ENCODE measurements at regions of chr15 and their contacts with region 1.

Region 1: DNA sequence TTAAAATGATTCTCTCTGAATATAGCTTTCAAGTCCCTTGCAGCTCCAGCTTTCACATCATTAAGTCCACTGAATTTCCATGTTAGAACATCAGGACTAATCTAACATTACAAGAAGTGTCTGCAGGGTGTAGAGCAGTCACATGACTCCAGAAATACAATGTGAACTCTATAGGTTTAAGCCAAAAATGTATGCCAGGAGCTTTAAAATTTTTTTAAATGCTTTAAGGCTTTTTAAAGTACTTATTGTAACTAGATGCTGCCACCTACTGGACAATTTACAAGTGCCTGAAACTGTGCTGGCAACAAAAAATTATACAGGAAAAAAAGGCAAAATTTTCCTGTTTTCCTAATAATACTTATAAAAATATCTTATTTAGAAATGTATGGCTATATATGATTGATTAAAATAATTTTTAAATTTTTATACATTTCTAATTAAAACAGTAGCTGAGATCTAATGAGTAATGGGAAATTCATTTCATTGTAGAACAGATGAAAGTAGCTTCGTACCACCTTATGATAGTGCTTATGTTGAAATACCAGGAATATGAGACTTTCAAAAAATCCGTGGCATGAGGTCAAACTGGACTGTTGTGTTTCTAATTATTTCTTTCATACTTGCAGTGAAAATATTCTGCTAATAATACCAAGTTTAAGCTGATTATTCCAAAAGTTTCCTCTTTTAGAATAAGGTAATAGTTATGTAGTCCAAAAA is 25.7 kb downstream of the FSIP1 start:
- DNase-seq: peak; percentile 38
- ATAC-seq: peak; percentile 37
- H3K4me3 Mint-ChIP-seq: no peak overlapping the region
- H3K27ac Mint-ChIP-seq: no peak overlapping the region
- H3K4me1 Mint-ChIP-seq: no peaks in the 10 kb centered on the region
- H3K27me3 Mint-ChIP-seq: no peaks in the 10 kb centered on the region
- CTCF ChIP-seq: peak; percentile 90

Region 2: DNA sequence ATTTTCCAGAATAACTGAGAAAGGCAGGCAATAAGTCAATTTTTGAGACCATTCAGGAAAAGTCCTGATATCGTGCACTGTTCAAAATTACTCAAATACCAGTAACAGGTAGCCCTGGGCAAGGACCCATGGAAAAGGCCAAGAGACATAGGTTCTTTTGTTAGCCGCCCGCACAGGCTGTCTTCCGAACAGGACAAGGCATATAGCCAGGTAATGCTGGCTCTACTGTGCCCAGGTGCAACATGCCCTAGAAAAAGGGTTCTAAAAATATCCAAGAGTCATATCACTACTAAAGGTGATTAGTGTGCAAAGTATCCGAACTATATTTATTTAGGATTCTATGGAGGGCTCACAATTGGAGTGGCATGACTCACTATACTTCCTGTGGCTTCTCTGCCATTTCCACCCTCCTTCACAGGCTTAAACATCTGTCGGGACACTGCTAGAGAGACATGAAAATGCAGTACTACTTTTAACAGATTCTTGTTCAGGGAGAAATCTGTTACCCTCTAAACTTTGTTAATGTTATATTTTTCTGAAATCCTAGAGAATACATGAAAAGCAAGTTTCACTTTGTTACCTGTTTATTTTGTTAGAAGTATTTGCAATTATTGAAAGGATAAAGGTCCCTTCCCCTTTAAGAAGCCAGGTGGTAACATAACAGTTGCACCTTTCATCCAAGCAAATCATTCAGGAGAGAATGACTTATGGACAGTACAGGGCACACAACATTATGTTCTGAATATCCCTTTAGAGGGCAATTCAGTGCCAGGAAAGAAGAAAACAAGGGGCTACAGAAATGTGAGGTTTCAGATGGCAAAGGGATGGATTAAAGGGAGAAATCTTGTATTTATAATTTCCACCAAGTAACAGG is 469.4 kb before region 1 on chr15:
- CTCF ChIA-PET with region 1: no interaction called
- POLR2A ChIA-PET with region 1: no interaction called
- intact Hi-C with region 1: no loop called
- DNase-seq: no peak
- ATAC-seq: no peak
- H3K4me3 Mint-ChIP-seq: no peak overlapping the region
- H3K27ac Mint-ChIP-seq: no peak overlapping the region
- H3K4me1 Mint-ChIP-seq: no peaks in the 10 kb centered on the region
- H3K27me3 Mint-ChIP-seq: peaks cover 21% of the 10 kb centered on the region
- CTCF ChIP-seq: no peak

Region 3: GRCh38 chr15:39539466-39539865 is 217.5 kb before region 1 on chr15:
- CTCF ChIA-PET with region 1: no interaction called
- POLR2A ChIA-PET with region 1: no interaction called
- intact Hi-C with region 1: no loop called
- DNase-seq: no peak
- ATAC-seq: no peak
- H3K4me3 Mint-ChIP-seq: no peak overlapping the region
- H3K27ac Mint-ChIP-seq: no peak overlapping the region
- H3K4me1 Mint-ChIP-seq: no peaks in the 10 kb centered on the region
- H3K27me3 Mint-ChIP-seq: peaks cover 3% of the 10 kb centered on the region
- CTCF ChIP-seq: no peak

Region 4: GRCh38 chr15:39605146-39605545 is 151.8 kb before region 1 on chr15:
- CTCF ChIA-PET with region 1: interaction called, 12 read pairs
- POLR2A ChIA-PET with region 1: no interaction called
- intact Hi-C with region 1: no loop called
- DNase-seq: no peak
- ATAC-seq: no peak
- H3K4me3 Mint-ChIP-seq: no peak overlapping the region
- H3K27ac Mint-ChIP-seq: no peak overlapping the region
- H3K4me1 Mint-ChIP-seq: peaks cover 2% of the 10 kb centered on the region
- H3K27me3 Mint-ChIP-seq: no peaks in the 10 kb centered on the region
- CTCF ChIP-seq: no peak

Region 5: DNA sequence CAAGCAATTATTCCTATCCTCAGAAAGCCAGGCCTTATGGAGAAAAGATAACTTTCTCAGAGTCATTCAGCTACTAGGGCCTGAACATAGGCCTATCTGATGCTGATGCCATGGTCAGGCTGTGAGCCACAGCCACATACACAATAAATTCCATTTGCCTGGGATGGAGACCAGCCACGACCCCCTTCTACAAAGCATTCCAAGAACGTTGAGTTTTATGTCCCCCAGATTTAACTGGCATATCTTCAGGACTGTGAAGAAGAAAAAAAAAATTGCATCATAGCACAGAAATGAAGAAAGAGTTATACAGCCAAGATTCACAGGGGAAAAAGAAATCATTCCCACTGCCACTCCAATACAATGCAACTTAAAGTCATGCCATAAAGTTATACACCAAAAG is 76.1 kb before region 1 on chr15:
- CTCF ChIA-PET with region 1: interaction called, 112 read pairs
- POLR2A ChIA-PET with region 1: no interaction called
- intact Hi-C with region 1: loop called (anchors 5 kb)
- DNase-seq: no peak
- ATAC-seq: no peak
- H3K4me3 Mint-ChIP-seq: no peak overlapping the region
- H3K27ac Mint-ChIP-seq: no peak overlapping the region
- H3K4me1 Mint-ChIP-seq: no peaks in the 10 kb centered on the region
- H3K27me3 Mint-ChIP-seq: no peaks in the 10 kb centered on the region
- CTCF ChIP-seq: no peak

Region 6: GRCh38 chr15:39692356-39693327 is 64.3 kb before region 1 on chr15:
- CTCF ChIA-PET with region 1: interaction called, 112 read pairs
- POLR2A ChIA-PET with region 1: no interaction called
- intact Hi-C with region 1: loop called (anchors 5 kb)
- DNase-seq: no peak
- ATAC-seq: no peak
- H3K4me3 Mint-ChIP-seq: no peak overlapping the region
- H3K27ac Mint-ChIP-seq: no peak overlapping the region
- H3K4me1 Mint-ChIP-seq: no peaks in the 10 kb centered on the region
- H3K27me3 Mint-ChIP-seq: no peaks in the 10 kb centered on the region
- CTCF ChIP-seq: no peak

Region 7: GRCh38 chr15:39736412-39737197 is 20.4 kb before region 1 on chr15:
- CTCF ChIA-PET with region 1: interaction called, 25 read pairs
- POLR2A ChIA-PET with region 1: no interaction called
- intact Hi-C with region 1: no loop called
- DNase-seq: no peak
- ATAC-seq: no peak
- H3K4me3 Mint-ChIP-seq: no peak overlapping the region
- H3K27ac Mint-ChIP-seq: no peak overlapping the region
- H3K4me1 Mint-ChIP-seq: no peaks in the 10 kb centered on the region
- H3K27me3 Mint-ChIP-seq: no peaks in the 10 kb centered on the region
- CTCF ChIP-seq: no peak

Region 8: DNA sequence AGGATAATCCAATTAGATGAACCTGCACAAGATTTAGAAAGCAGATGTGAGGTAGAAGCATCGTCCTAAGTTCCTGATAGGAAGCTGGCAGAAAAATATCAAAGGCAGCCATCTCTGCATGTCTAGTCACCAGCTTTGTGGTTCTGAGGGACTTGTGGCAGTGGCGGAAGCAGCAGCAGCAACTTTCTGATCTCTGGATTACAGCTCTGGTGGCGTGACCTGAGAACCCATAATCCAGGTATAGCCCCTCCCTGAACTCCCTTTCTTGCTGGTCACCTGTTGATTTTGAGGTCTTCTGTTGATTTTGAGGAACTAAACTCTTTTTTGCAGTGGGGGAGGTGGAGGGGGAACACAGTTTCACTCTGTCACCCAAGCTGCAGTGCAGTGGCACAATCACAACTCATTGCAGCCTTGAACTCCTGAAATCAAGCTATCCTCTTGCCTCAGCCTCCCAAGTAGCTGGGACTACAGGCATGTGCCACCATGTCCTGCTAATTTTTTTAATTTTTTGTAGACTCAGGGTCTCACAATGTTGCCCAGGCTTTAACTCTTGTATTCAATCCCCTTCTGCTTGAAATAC is 17.8 kb after region 1 on chr15:
- CTCF ChIA-PET with region 1: interaction called, 41 read pairs
- POLR2A ChIA-PET with region 1: interaction called, 4 read pairs
- intact Hi-C with region 1: no loop called
- DNase-seq: peak; percentile 72
- ATAC-seq: peak; percentile 90
- H3K4me3 Mint-ChIP-seq: peak overlapping the region; percentile 41
- H3K27ac Mint-ChIP-seq: peak overlapping the region; percentile 69
- H3K4me1 Mint-ChIP-seq: peaks cover 20% of the 10 kb centered on the region
- H3K27me3 Mint-ChIP-seq: no peaks in the 10 kb centered on the region
- CTCF ChIP-seq: no peak

Region 9: GRCh38 chr15:40069178-40070165 is 312.5 kb after region 1 on chr15:
- CTCF ChIA-PET with region 1: no interaction called
- POLR2A ChIA-PET with region 1: no interaction called
- intact Hi-C with region 1: no loop called
- DNase-seq: no peak
- ATAC-seq: no peak
- H3K4me3 Mint-ChIP-seq: no peak overlapping the region
- H3K27ac Mint-ChIP-seq: no peak overlapping the region
- H3K4me1 Mint-ChIP-seq: peaks cover 18% of the 10 kb centered on the region
- H3K27me3 Mint-ChIP-seq: no peaks in the 10 kb centered on the region
- CTCF ChIP-seq: no peak

Region 10: DNA sequence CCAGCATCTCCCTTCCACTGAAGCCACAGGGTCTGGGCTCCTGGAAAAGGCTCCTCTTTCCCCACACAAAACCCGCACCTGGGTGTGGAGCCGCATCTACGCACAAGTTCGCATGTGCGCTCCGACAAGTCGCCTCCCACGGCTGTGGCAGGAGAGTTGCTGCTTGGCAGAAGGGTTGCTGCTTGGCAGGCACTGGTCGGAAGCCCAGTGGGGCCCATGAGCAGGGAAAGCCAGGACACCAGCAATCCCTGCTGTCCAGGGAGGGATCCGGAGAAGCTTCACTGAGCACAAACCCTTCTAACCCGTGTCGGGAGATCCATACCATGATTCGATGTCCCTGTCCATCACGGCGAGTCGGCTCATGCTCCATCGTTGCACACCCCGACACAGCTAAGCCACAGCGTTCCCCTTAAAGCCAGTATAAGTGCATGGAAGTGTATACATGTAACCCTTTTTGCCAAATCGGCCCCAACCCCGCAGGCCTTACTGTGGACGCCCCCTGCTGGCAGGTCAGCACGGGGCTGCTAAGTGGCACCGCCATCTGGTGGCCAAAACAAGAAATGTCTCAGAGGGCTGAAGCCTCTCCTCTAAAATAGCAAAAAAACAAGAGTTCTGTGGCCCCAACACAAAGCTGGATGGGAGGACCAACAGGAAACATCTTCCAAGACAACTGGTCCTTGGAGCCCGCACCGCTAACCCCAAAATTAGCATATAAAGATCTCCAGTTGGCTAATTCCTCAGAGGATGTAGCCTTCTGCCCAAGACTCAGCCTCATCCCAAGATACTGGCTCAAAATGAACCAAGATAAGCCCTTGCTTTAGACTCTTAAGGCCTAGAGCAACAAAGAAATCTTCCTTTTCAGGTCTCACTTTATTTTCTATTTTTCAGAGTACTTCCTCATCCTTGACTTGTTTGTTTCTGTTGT is 517.6 kb after region 1 on chr15:
- CTCF ChIA-PET with region 1: no interaction called
- POLR2A ChIA-PET with region 1: no interaction called
- intact Hi-C with region 1: no loop called
- DNase-seq: peak; percentile 89
- ATAC-seq: peak; percentile 81
- H3K4me3 Mint-ChIP-seq: no peak overlapping the region
- H3K27ac Mint-ChIP-seq: no peak overlapping the region
- H3K4me1 Mint-ChIP-seq: no peaks in the 10 kb centered on the region
- H3K27me3 Mint-ChIP-seq: peaks cover 14% of the 10 kb centered on the region
- CTCF ChIP-seq: peak; percentile 100

Measured in activated CD8-positive, alpha-beta T cell treated with anti-CD3 and anti-CD28 coated beads for 36 hours (primary cell).